ENCODE measurements at regions of chr4 and their contacts with region 1.

Region 1: GRCh38 chr4:91113130-91113706 is 986.0 kb downstream of the CCSER1 start:
- DNase-seq: peak; percentile 5
- H3K4me3 ChIP-seq: no peak overlapping the region
- H3K27ac ChIP-seq: no peak overlapping the region
- H3K4me1 ChIP-seq: no peaks in the 10 kb centered on the region
- H3K27me3 ChIP-seq: no peaks in the 10 kb centered on the region
- CTCF ChIP-seq: peak; percentile 49 to 60

Region 2: GRCh38 chr4:90317785-90318184 is 795.4 kb before region 1 on chr4:
- CTCF ChIA-PET with region 1: no interaction called
- dilution Hi-C with region 1: no loop called
- in situ Hi-C with region 1: no loop called
- intact Hi-C with region 1: loop called (anchors 5 kb)
- DNase-seq: peak; percentile 84
- H3K4me3 ChIP-seq: no peak overlapping the region
- H3K27ac ChIP-seq: peak overlapping the region; percentile 81
- H3K4me1 ChIP-seq: peaks cover 11% of the 10 kb centered on the region
- H3K27me3 ChIP-seq: no peaks in the 10 kb centered on the region
- CTCF ChIP-seq: no peak

Region 3: GRCh38 chr4:90357117-90357710 is 756.0 kb before region 1 on chr4:
- CTCF ChIA-PET with region 1: no interaction called
- dilution Hi-C with region 1: no loop called
- in situ Hi-C with region 1: no loop called
- intact Hi-C with region 1: loop called (anchors 2 kb)
- DNase-seq: peak; percentile 36
- H3K4me3 ChIP-seq: no peak overlapping the region
- H3K27ac ChIP-seq: no peak overlapping the region
- H3K4me1 ChIP-seq: no peaks in the 10 kb centered on the region
- H3K27me3 ChIP-seq: no peaks in the 10 kb centered on the region
- CTCF ChIP-seq: peak; percentile 58 to 64

Region 4: GRCh38 chr4:91502365-91502764 is 389.1 kb after region 1 on chr4:
- CTCF ChIA-PET with region 1: no interaction called
- dilution Hi-C with region 1: no loop called
- in situ Hi-C with region 1: no loop called
- intact Hi-C with region 1: loop called (anchors 5 kb)
- DNase-seq: no peak
- H3K4me3 ChIP-seq: no peak overlapping the region
- H3K27ac ChIP-seq: no peak overlapping the region
- H3K4me1 ChIP-seq: no peaks in the 10 kb centered on the region
- H3K27me3 ChIP-seq: no peaks in the 10 kb centered on the region
- CTCF ChIP-seq: peak; percentile 10 to 38

Region 5: GRCh38 chr4:91681544-91681943 is 568.3 kb after region 1 on chr4:
- CTCF ChIA-PET with region 1: no interaction called
- dilution Hi-C with region 1: no loop called
- in situ Hi-C with region 1: no loop called
- intact Hi-C with region 1: no loop called
- DNase-seq: peak; percentile 0
- H3K4me3 ChIP-seq: no peak overlapping the region
- H3K27ac ChIP-seq: no peak overlapping the region
- H3K4me1 ChIP-seq: no peaks in the 10 kb centered on the region
- H3K27me3 ChIP-seq: no peaks in the 10 kb centered on the region
- CTCF ChIP-seq: no peak

Measured in mammary epithelial cell (primary cell).